Mammary epithelial cell (primary cell): ENCODE measurements at regions of chr11 and their contacts with region 1.

Region 1: GRCh38 chr11:72102946-72103753 is at the start of gene LAMTOR1:
- DNase-seq: peak; percentile 95
- H3K4me3 ChIP-seq: peak within 1 kb of the TSS; percentile 80 to 94 (median 84)
- H3K27ac ChIP-seq: peak within 1 kb of the TSS; percentile 86
- H3K4me1 ChIP-seq: peaks cover 31% of the 10 kb centered on the region
- H3K27me3 ChIP-seq: no peaks in the 10 kb centered on the region
- CTCF ChIP-seq: peak; percentile 35 to 40
- total RNA-seq, gene LAMTOR1: 105 to 183 TPM

Region 2: DNA sequence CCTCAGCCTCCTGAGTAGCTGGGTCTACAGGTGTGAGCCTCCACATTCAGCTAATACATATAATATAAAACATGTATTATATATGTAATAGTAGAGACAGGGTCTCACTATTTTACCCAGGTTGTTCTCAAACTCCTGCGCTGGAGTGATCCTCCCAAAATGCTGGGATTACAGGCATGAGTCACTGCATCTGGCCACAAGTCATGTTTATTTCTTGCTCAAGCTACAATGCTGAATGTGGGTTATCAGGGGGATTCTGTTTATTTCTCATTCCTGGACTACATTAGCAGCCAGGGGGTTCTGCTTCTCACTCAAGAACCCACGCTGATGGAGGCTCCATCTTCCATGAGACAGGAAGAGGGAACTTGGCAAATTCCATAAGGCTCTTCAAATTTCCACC is 57.2 kb after region 1 on chr11:
- CTCF ChIA-PET with region 1: no interaction called
- dilution Hi-C with region 1: no loop called
- in situ Hi-C with region 1: no loop called
- intact Hi-C with region 1: no loop called
- DNase-seq: no peak
- H3K4me3 ChIP-seq: no peak overlapping the region
- H3K27ac ChIP-seq: no peak overlapping the region
- H3K4me1 ChIP-seq: no peaks in the 10 kb centered on the region
- H3K27me3 ChIP-seq: no peaks in the 10 kb centered on the region
- CTCF ChIP-seq: no peak

Region 3: DNA sequence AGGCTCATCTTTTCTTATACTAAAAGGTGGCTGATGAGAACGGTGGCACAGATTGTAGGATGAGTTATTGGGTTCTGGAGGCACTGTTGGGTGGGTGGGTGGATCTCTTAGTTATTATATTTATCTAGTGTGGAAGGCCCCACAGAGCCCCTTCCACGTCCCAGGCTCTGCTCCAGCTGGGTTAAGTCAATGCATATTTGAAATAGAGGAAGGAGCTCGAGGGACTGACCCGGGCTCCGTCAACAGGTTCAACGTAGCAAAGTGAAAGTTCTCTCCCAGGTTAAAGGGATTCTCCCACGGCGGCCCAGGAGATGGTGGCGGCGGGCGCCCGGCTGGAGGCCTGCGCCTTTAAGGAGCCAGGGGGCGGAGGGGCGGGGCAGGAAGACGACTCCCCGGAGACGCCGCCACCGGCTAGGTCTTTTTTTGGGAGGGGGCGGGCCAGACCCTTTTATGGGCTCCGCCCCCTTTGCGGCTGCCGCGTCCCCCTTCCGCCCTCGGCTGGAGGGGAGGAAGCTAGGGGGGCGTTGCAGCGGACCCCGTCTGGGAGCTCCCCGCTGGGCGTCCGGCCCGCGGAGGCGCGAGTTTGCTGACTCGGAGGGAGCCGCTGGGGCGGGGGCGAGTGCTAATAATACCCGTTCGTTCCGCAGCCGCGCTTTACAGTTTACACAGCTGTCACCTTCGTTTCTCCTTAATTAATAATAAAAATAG is 119.9 kb after region 1 on chr11:
- CTCF ChIA-PET with region 1: no interaction called
- dilution Hi-C with region 1: no loop called
- in situ Hi-C with region 1: no loop called
- intact Hi-C with region 1: loop called (anchors 5 kb)
- DNase-seq: peak; percentile 87
- H3K4me3 ChIP-seq: peak overlapping the region; percentile 81 to 88 (median 85)
- H3K27ac ChIP-seq: peak overlapping the region; percentile 56
- H3K4me1 ChIP-seq: peaks cover 32% of the 10 kb centered on the region
- H3K27me3 ChIP-seq: no peaks in the 10 kb centered on the region
- CTCF ChIP-seq: peak in 1 of 2 donors; percentile 37